HEK293 (cell line): ENCODE measurements at regions of chr6 and their contacts with region 1.

Region 1: GRCh38 chr6:38973178-38974054 is 75.2 kb upstream of the GLP1R start:
- H3K4me3 ChIP-seq: no peak overlapping the region
- H3K27ac ChIP-seq: no peak overlapping the region
- H3K4me1 ChIP-seq: peaks cover 43% of the 10 kb centered on the region
- CTCF ChIP-seq: peak; percentile 83

Region 2: DNA sequence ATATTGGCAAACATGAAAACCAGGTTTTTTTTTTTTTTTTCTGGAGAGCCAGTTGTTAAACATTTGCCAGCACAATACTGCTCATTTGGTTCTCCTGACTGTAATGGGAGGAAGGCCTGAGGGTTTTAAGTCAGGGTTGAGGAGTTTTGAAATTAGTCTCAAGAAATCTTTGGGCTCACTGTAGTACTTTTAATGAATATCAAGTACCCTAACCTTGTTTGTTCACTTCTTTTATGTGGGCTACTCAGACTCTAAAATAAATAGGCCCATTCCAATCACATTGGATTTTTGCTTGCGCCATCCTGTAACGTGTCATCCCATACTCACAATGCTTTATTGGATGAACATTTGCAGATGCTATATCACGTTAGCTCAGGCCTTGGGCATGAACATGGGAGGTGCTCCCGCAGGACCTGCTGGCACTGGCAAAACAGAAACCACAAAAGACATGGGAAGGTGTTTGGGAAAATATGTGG is 111.5 kb before region 1 on chr6:
- CTCF ChIA-PET with region 1: no interaction called
- POLR2A ChIA-PET with region 1: no interaction called
- H3K4me3 ChIP-seq: no peak overlapping the region
- H3K27ac ChIP-seq: no peak overlapping the region
- H3K4me1 ChIP-seq: no peaks in the 10 kb centered on the region
- CTCF ChIP-seq: no peak

Region 3: GRCh38 chr6:38987503-38987902 is 14.1 kb after region 1 on chr6:
- CTCF ChIA-PET with region 1: interaction called, 24 read pairs
- POLR2A ChIA-PET with region 1: no interaction called
- H3K4me3 ChIP-seq: no peak overlapping the region
- H3K27ac ChIP-seq: no peak overlapping the region
- H3K4me1 ChIP-seq: peaks cover 2% of the 10 kb centered on the region; the same call in 1 of the 2 replicates
- CTCF ChIP-seq: no peak

Region 4: GRCh38 chr6:39003072-39003471 is 29.7 kb after region 1 on chr6:
- CTCF ChIA-PET with region 1: interaction called, 77 read pairs
- POLR2A ChIA-PET with region 1: no interaction called
- H3K4me3 ChIP-seq: no peak overlapping the region
- H3K27ac ChIP-seq: no peak overlapping the region
- H3K4me1 ChIP-seq: no peaks in the 10 kb centered on the region
- CTCF ChIP-seq: no peak

Region 5: GRCh38 chr6:39102071-39102820 is 128.8 kb after region 1 on chr6:
- CTCF ChIA-PET with region 1: interaction called, 17 read pairs
- POLR2A ChIA-PET with region 1: no interaction called
- H3K4me3 ChIP-seq: no peak overlapping the region
- H3K27ac ChIP-seq: no peak overlapping the region
- H3K4me1 ChIP-seq: no peaks in the 10 kb centered on the region
- CTCF ChIP-seq: no peak

Region 6: GRCh38 chr6:39153766-39154397 is 180.5 kb after region 1 on chr6:
- CTCF ChIA-PET with region 1: interaction called, 16 read pairs
- POLR2A ChIA-PET with region 1: no interaction called
- H3K4me3 ChIP-seq: no peak overlapping the region
- H3K27ac ChIP-seq: no peak overlapping the region
- H3K4me1 ChIP-seq: peaks cover 6% of the 10 kb centered on the region; the same call in 1 of the 2 replicates
- CTCF ChIP-seq: no peak

Region 7: GRCh38 chr6:39203852-39204375 is 230.5 kb after region 1 on chr6:
- CTCF ChIA-PET with region 1: interaction called, 12 read pairs
- POLR2A ChIA-PET with region 1: no interaction called
- H3K4me3 ChIP-seq: no peak overlapping the region
- H3K27ac ChIP-seq: no peak overlapping the region
- H3K4me1 ChIP-seq: peaks cover 5% of the 10 kb centered on the region
- CTCF ChIP-seq: no peak